ENCODE measurements at regions of chrX and their contacts with region 1.

Region 1: GRCh38 chrX:118847676-118848075 is 24.1 kb downstream of the ZCCHC12 start:
- DNase-seq: peak; percentile 62

Region 2: GRCh38 chrX:119067023-119067739 is 219.5 kb after region 1 on chrX:
- CTCF ChIA-PET with region 1: interaction called, 10 read pairs
- POLR2A ChIA-PET with region 1: no interaction called
- DNase-seq: peak; percentile 82

Measured in HEK293T (cell line).